ENCODE measurements at regions of chr11 and their contacts with region 1.

Region 1: GRCh38 chr11:34344768-34345539 is 12.9 kb downstream of the ABTB2 start:
- DNase-seq: peak; percentile 68 to 69
- H3K4me3 ChIP-seq: no peak overlapping the region
- H3K27ac ChIP-seq: peak overlapping the region; percentile 66 to 81
- H3K4me1 ChIP-seq: peaks cover 7 to 19% of the 10 kb centered on the region in 2 donors
- H3K27me3 ChIP-seq: no peaks in the 10 kb centered on the region
- CTCF ChIP-seq: no peak
- POLR2A ChIP-seq: no peak

Region 2: DNA sequence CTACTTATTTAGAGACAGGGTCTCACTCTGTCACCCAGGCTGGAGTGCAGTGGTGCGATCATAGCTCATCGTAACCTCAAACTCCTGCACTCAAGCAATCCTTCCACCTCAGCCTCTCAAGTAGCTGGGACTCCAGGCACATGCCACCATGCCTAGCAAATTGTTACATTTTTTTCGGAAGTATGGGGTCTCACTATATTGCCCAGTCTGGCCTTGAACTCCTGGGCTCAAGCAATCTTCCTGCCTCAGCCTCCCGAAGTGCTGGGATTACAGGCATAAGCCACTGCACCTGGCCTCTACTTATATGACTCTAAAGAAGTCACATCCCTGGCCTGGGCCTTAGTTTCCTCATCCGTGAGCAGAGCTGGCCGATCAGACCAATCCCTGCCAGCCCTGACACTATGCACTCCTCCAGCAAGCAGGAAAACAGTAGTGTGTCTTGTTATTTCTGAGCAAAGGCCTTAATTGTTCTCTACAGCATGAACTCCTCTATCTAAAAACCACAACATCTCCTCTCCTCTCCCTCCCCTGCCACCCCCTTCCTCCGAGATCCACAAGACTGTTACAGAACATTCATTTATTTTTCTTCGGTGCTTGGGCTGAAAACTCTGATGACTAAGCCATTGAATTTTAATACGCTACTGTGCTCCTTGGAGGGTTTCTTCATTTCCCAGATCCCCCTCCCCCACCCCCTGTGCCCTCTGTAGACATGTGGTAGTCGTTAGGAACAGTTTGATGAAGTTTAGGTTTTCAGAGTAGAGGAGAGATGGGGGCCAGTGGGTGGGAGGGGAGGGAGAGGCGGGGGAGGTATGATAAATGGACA is 78.7 kb before region 1 on chr11:
- intact Hi-C with region 1: loop called (anchors 10 kb)
- DNase-seq: peak; percentile 65 to 91
- H3K4me3 ChIP-seq: no peak overlapping the region
- H3K27ac ChIP-seq: peak overlapping the region; percentile 82
- H3K4me1 ChIP-seq: peaks cover 0 to 16% of the 10 kb centered on the region in 2 donors
- H3K27me3 ChIP-seq: no peaks in the 10 kb centered on the region
- CTCF ChIP-seq: no peak
- POLR2A ChIP-seq: no peak

Region 3: GRCh38 chr11:34278693-34279297 is 66.2 kb before region 1 on chr11:
- intact Hi-C with region 1: no loop called
- DNase-seq: no peak
- H3K4me3 ChIP-seq: no peak overlapping the region
- H3K27ac ChIP-seq: no peak overlapping the region
- H3K4me1 ChIP-seq: no peaks in the 10 kb centered on the region
- H3K27me3 ChIP-seq: no peaks in the 10 kb centered on the region
- CTCF ChIP-seq: no peak
- POLR2A ChIP-seq: no peak